Caco-2 (cell line): ENCODE measurements at regions of chr11 and their contacts with region 1.

Region 1: GRCh38 chr11:76524919-76525318 is 80.1 kb downstream of the EMSY start:
- DNase-seq: no peak
- H3K4me3 ChIP-seq: no peak overlapping the region
- H3K4me3 Mint-ChIP-seq: no peak overlapping the region
- H3K27ac Mint-ChIP-seq: no peak overlapping the region
- H3K4me1 ChIP-seq: peaks cover 47% of the 10 kb centered on the region
- H3K4me1 Mint-ChIP-seq: peaks cover 50% of the 10 kb centered on the region
- H3K27me3 ChIP-seq: no peaks in the 10 kb centered on the region
- H3K27me3 Mint-ChIP-seq: no peaks in the 10 kb centered on the region
- CTCF ChIP-seq: no peak

Region 2: DNA sequence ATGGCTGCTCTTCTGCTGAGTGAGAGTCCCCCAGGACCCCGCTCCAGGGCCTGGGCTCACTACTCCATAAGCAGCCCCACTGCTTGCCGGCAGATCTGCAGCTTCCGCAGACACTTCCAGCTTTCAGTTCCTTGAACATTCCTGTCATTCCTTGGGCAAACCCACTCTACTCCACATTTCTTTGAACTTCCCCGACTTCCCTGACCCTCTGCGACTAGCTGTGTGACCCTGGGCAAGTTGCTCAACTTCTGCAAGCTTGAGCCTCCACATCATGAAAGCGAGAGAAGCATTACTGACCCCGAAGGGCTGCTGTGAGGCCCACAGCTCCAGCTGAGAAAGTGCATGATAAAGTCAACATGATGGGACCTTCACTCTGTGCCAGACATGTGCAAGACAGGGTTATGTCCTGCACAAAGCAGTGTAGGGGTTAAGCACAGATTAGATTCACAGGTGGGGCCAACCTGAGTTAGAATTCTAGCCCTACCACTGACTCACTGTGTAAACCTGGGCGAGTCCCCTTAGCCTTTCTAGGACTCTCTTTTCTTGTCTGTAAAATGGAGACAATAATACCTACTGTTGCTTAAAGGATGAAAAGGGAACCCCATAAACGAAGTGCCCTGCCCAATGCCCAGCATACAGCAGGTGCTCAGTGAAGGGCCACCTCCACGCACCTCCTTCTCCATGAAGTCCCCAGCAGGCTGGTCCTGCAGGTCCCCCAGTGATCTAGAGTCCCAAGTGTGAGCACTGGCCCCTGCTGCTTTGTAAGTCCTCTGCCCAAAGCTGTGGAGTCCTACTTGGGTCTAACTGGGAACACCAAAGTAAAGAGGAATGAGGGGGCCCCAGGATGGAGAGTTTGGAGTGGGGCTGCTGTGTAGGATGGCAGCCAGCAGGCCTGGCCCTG is 195.6 kb before region 1 on chr11:
- CTCF ChIA-PET with region 1: no interaction called
- POLR2A ChIA-PET with region 1: no interaction called
- intact Hi-C with region 1: loop called (anchors 2 kb)
- DNase-seq: peak; percentile 97 to 99
- H3K4me3 ChIP-seq: no peak overlapping the region
- H3K4me3 Mint-ChIP-seq: peak overlapping the region; percentile 51
- H3K27ac Mint-ChIP-seq: peak overlapping the region; percentile 84
- H3K4me1 ChIP-seq: peaks cover 39% of the 10 kb centered on the region
- H3K4me1 Mint-ChIP-seq: peaks cover 38% of the 10 kb centered on the region
- H3K27me3 ChIP-seq: no peaks in the 10 kb centered on the region
- H3K27me3 Mint-ChIP-seq: no peaks in the 10 kb centered on the region
- CTCF ChIP-seq: no peak